Activated B cell treated with CpG ODN at 0.5 μM for 24 hours (primary cell): ENCODE measurements at regions of chr7 and their contacts with region 1.

Region 1: DNA sequence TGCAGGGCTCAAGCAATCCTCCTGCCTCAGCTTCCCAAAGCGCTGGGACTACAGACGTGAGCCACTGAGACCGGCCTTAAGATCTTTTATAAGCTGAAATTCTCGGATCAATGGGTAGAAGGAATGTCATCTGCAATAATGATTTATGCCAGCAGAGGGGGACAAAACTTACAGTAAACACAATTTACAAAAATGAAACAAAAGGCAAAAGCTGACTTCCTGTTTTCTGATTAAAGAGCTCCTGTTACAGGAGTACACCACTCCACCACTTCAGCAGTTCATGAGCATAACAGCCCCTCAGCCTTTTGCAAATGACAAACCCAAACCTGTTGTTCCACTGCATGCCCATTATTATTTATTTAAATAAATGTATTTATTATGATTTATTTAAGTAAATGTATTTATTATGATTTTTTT is 88.5 kb upstream of the ATP6V0A4 start:
- DNase-seq: no peak
- ATAC-seq: peak; percentile 60
- H3K4me3 Mint-ChIP-seq: no peak overlapping the region
- H3K27ac Mint-ChIP-seq: no peak overlapping the region
- H3K4me1 Mint-ChIP-seq: peaks cover 2% of the 10 kb centered on the region
- H3K27me3 Mint-ChIP-seq: peaks cover 3% of the 10 kb centered on the region
- CTCF ChIP-seq: no peak

Region 2: DNA sequence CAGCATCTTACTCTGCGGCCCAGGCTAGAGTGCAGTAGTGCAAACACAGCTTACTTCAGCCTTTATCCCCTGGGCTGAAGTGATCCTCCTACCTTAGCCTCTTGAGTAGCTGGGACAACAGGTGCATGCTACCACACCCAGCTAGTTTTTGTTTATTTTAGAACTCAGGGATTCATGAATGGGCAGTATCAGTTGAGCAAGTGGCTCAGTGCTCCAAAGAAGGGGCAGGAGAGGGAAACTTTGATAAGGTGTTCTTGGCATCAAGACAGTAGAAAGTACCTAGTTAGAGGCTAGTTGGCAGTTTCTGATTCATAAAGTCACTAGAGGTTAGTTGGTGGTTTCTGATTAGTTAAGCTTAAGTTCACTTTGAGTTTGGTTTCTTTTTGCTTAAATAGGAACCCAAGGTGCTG is 408.0 kb before region 1 on chr7:
- CTCF ChIA-PET with region 1: no interaction called
- POLR2A ChIA-PET with region 1: no interaction called
- intact Hi-C with region 1: no loop called
- DNase-seq: no peak
- ATAC-seq: peak; percentile 21
- H3K4me3 Mint-ChIP-seq: no peak overlapping the region
- H3K27ac Mint-ChIP-seq: no peak overlapping the region
- H3K4me1 Mint-ChIP-seq: peaks cover 33% of the 10 kb centered on the region
- H3K27me3 Mint-ChIP-seq: no peaks in the 10 kb centered on the region
- CTCF ChIP-seq: no peak

Region 3: GRCh38 chr7:138981332-138982203 is 95.1 kb after region 1 on chr7 and contains the start of gene KIAA1549:
- CTCF ChIA-PET with region 1: interaction called, 6 read pairs
- POLR2A ChIA-PET with region 1: no interaction called
- intact Hi-C with region 1: loop called (anchors 5 kb)
- DNase-seq: peak; percentile 61
- ATAC-seq: peak; percentile 93
- H3K4me3 Mint-ChIP-seq: peak within 1 kb of the TSS; percentile 88
- H3K27ac Mint-ChIP-seq: no peak within 1 kb of the TSS
- H3K4me1 Mint-ChIP-seq: peaks cover 12% of the 10 kb centered on the region
- H3K27me3 Mint-ChIP-seq: peaks cover 45% of the 10 kb centered on the region
- CTCF ChIP-seq: no peak
- total RNA-seq, gene KIAA1549: 0.42 and 0.46 TPM in 2 replicates

Region 4: DNA sequence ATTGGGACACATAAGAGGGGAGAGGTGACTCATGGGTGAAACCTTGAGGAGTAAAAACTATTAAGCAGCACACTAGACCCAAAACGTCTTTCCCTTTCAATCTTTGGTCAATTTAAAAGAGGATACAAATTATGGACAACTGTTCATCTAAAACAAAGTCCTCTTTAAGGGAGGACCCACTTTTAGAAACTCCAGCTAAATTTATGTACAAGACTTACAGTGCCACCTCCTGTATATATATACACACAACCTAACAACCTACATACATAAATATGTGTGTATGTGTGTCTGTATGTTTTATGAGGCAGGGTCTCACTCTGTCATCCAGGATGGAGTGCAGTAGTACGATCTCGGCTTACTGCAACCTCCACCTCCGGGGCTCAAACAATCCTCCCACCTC is 241.1 kb after region 1 on chr7:
- CTCF ChIA-PET with region 1: no interaction called
- POLR2A ChIA-PET with region 1: no interaction called
- intact Hi-C with region 1: loop called (anchors 2 kb)
- DNase-seq: no peak
- ATAC-seq: peak; percentile 49
- H3K4me3 Mint-ChIP-seq: no peak overlapping the region
- H3K27ac Mint-ChIP-seq: no peak overlapping the region
- H3K4me1 Mint-ChIP-seq: peaks cover 35% of the 10 kb centered on the region
- H3K27me3 Mint-ChIP-seq: no peaks in the 10 kb centered on the region
- CTCF ChIP-seq: no peak